MCF 10A (cell line): ENCODE measurements at regions of chr16 and their contacts with region 1.

Region 1: DNA sequence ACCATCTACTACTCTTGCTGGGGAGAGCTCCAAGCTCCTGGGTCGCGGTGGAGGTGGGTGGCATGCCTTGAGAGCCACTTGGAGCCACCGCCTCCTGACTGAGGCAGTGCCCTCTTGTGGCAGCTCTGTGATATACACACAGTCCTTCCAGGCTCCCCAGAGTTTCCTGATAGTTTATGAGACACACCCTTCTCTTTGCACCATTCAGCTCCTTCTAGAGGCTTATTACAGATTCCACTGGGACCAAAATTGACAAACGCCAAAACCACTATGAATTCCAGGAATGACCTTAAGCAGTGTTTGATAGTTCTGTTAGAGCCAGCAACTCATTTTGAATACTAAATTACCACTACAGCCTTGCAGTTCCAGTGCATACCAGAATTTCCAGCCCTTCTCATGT is 170.1 kb upstream of the CDH13 start:
- DNase-seq: peak; percentile 74
- H3K4me3 Mint-ChIP-seq: no peak overlapping the region
- H3K27ac Mint-ChIP-seq: no peak overlapping the region
- H3K4me1 Mint-ChIP-seq: peaks cover 17% of the 10 kb centered on the region
- H3K27me3 Mint-ChIP-seq: peaks cover 82% of the 10 kb centered on the region
- CTCF ChIP-seq: peak; percentile 70

Region 2: GRCh38 chr16:82432261-82432660 is 24.4 kb before region 1 on chr16:
- CTCF ChIA-PET with region 1: interaction called, 11 read pairs
- POLR2A ChIA-PET with region 1: no interaction called
- intact Hi-C with region 1: no loop called
- DNase-seq: no peak
- H3K4me3 Mint-ChIP-seq: no peak overlapping the region
- H3K27ac Mint-ChIP-seq: no peak overlapping the region
- H3K4me1 Mint-ChIP-seq: no peaks in the 10 kb centered on the region
- H3K27me3 Mint-ChIP-seq: peaks cover 98% of the 10 kb centered on the region
- CTCF ChIP-seq: no peak

Region 3: DNA sequence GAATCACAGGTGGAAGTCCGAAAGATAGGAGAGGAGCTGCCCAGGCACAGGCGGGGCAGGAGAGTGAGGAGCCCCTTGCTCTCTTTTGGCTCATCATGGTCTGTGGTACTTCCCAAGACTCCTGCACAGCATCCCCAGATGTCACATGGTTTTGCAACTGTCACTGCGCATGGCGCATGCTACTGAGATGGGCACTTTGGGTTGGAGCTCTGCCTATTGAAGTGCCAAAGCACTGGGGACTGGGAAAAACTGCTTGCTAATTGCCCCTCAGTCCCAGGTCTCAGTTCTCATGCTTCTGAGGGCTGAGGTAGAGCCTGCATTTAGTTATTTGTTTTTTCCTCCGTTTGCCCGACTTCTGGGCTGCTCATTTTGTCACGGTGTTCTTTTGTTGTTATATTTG is 13.3 kb after region 1 on chr16:
- CTCF ChIA-PET with region 1: interaction called, 39 read pairs
- POLR2A ChIA-PET with region 1: no interaction called
- intact Hi-C with region 1: no loop called
- DNase-seq: no peak
- H3K4me3 Mint-ChIP-seq: no peak overlapping the region
- H3K27ac Mint-ChIP-seq: no peak overlapping the region
- H3K4me1 Mint-ChIP-seq: no peaks in the 10 kb centered on the region
- H3K27me3 Mint-ChIP-seq: peaks cover 76% of the 10 kb centered on the region
- CTCF ChIP-seq: no peak

Region 4: DNA sequence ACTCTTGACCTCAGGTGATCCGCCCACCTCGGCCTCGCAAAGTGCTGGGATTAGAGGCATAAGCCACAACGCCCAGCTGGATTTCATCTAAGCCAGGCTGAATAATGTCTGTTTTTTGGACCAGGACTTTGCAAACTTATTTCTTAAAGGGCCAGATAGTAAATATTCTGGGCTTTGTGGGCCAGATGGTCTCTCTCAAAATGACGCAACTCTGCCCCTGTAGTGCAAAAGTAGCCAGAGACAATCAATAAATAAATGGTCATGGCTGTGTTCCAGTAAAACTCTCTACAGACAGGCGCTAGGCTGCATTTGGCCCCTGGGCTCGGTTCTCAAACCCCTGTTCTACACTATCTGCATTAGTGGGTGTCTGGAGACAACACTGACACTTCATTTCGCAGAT is 48.2 kb after region 1 on chr16:
- CTCF ChIA-PET with region 1: interaction called, 10 read pairs
- POLR2A ChIA-PET with region 1: no interaction called
- intact Hi-C with region 1: no loop called
- DNase-seq: no peak
- H3K4me3 Mint-ChIP-seq: no peak overlapping the region
- H3K27ac Mint-ChIP-seq: no peak overlapping the region
- H3K4me1 Mint-ChIP-seq: no peaks in the 10 kb centered on the region
- H3K27me3 Mint-ChIP-seq: peaks cover 36% of the 10 kb centered on the region
- CTCF ChIP-seq: no peak

Region 5: GRCh38 chr16:82580298-82580890 is 123.7 kb after region 1 on chr16:
- CTCF ChIA-PET with region 1: interaction called, 9 read pairs
- POLR2A ChIA-PET with region 1: no interaction called
- intact Hi-C with region 1: loop called (anchors 5 kb)
- DNase-seq: peak; percentile 38
- H3K4me3 Mint-ChIP-seq: no peak overlapping the region
- H3K27ac Mint-ChIP-seq: no peak overlapping the region
- H3K4me1 Mint-ChIP-seq: no peaks in the 10 kb centered on the region
- H3K27me3 Mint-ChIP-seq: peaks cover 65% of the 10 kb centered on the region
- CTCF ChIP-seq: peak; percentile 30